Naive thymus-derived CD4-positive, alpha-beta T cell (primary cell): ENCODE measurements at regions of chr3 and their contacts with region 1.

Region 1: DNA sequence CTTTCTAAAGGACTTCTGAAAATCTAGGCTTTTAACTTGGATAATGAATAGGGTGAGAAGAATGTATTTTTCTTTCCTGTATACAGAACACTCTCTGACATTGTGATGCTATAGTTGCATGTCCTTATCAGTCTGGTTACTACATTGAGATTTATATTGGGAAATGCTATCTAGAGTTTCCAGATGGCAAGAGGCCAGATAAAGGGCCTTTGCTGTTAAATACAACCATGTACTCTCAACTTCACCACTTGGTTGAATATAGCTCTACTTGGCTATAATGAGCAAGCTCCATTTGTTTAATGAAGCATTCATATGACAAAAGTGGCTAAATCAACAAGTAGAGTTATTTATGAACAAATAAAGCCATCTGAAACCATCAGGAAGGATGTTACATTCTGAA is 91.0 kb downstream of the IGSF11 start:
- DNase-seq: no peak
- ATAC-seq: no peak
- H3K4me3 ChIP-seq: no peak overlapping the region
- H3K4me3 Mint-ChIP-seq: no peak overlapping the region
- H3K27ac ChIP-seq: no peak overlapping the region
- H3K27ac Mint-ChIP-seq: peak overlapping the region in 1 of 9 donors; percentile 26
- H3K4me1 ChIP-seq: peaks cover 0 to 28% of the 10 kb centered on the region in 2 donors
- H3K4me1 Mint-ChIP-seq: peaks cover 24 to 72% (median 66%) of the 10 kb centered on the region in 7 donors
- H3K27me3 ChIP-seq: no peaks in the 10 kb centered on the region
- H3K27me3 Mint-ChIP-seq: peaks cover 0 to 9% (median 0%) of the 10 kb centered on the region in 5 donors

Region 2: DNA sequence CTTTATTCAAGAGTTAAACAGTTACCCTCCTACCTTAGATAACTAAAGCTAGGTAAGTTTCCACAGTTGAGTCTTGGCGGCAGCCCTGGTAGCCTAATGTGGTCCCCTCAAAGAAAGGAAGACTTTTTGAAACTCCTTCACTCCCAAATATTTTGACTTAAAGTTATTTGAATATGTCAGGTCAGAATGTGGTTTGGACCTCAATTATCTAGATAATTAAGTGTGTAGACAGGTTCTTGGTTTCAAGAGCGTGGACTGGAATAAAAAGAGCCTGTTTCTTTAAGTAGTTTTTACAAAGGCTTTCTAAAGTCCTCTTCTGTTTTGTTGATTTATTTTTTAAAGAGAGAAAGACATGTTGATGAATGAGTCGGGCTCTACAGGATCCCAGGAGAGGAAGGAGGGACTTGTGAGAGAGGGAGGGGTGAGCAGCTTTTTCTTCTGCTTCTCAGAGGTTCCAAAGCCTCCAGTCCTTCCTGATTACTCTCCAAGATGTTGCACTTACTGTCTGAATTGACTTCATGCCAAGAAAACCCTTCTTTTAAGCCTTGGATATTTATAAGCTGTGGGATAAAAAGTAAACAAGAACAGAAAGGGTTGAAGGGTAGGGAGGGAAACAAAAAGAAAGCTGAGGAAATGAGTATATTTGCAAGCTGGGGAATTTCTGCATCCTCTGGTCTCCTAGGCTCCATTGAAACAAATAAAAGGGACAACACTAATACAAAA is 366.4 kb before region 1 on chr3:
- CTCF ChIA-PET with region 1: no interaction called
- POLR2A ChIA-PET with region 1: no interaction called
- intact Hi-C with region 1: no loop called
- DNase-seq: no peak
- ATAC-seq: no peak
- H3K4me3 ChIP-seq: no peak overlapping the region
- H3K4me3 Mint-ChIP-seq: no peak overlapping the region
- H3K27ac ChIP-seq: no peak overlapping the region
- H3K27ac Mint-ChIP-seq: no peak overlapping the region
- H3K4me1 ChIP-seq: no peaks in the 10 kb centered on the region
- H3K4me1 Mint-ChIP-seq: no peaks in the 10 kb centered on the region
- H3K27me3 ChIP-seq: no peaks in the 10 kb centered on the region
- H3K27me3 Mint-ChIP-seq: peaks cover 0 to 9% (median 0%) of the 10 kb centered on the region in 5 donors

Region 3: DNA sequence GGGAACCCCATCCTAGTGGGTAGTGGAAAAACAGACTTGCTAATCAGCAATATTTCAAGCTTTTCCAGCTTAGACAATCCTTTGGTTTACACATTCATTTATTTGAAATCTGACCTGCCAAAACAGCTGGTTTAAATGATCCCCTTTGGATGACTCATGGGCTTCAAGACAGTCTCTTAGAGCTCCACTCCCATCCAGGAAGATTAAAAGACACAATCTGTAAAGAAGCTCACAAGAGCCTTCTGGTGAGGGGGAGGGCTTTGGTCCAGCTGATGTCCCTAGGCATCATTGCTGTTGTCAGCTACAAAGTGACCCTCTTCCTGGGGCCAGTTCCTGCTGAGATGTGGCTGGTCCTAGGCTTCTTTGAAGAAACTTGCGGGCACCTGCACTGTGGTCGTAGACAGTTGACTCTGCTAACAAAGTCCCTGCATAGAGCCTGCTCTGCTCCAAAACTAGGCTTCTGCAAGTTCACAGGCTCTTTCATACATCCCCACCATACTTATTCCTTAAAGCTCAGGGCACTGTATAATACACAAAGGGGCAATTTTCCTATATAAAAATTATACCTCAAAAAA is 17.4 kb after region 1 on chr3:
- CTCF ChIA-PET with region 1: interaction called, 6 read pairs
- POLR2A ChIA-PET with region 1: interaction called, 5 read pairs
- intact Hi-C with region 1: loop called in 1 of 2 experiments (anchors 1 kb)
- DNase-seq: no peak
- ATAC-seq: no peak
- H3K4me3 ChIP-seq: no peak overlapping the region
- H3K4me3 Mint-ChIP-seq: no peak overlapping the region
- H3K27ac ChIP-seq: no peak overlapping the region
- H3K27ac Mint-ChIP-seq: no peak overlapping the region
- H3K4me1 ChIP-seq: peaks cover 9 to 19% of the 10 kb centered on the region in 2 donors
- H3K4me1 Mint-ChIP-seq: peaks cover 13 to 34% (median 29%) of the 10 kb centered on the region in 7 donors
- H3K27me3 ChIP-seq: no peaks in the 10 kb centered on the region
- H3K27me3 Mint-ChIP-seq: peaks cover 0 to 25% (median 4%) of the 10 kb centered on the region in 5 donors

Region 4: DNA sequence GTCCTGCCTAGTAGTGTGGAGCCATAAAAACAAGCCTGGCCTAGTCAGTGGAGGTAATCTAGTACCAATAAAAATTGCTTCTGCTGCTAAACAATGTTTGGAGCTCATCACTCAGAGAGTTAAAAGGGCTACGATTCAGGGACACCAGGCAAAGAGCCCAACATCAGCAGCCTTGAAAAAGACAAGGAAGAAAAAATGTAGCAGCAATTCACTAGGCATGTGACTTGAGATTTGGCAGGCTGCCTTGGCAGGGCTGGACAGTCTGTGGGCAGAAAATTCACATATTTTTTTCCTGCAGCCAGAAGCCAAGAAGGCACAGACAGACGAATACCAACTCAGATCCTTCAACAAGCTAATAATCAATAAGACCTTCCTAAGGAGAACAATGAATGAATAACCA is 43.9 kb after region 1 on chr3:
- CTCF ChIA-PET with region 1: no interaction called
- POLR2A ChIA-PET with region 1: no interaction called
- intact Hi-C with region 1: loop called in 1 of 2 experiments (anchors 5 kb)
- DNase-seq: no peak
- ATAC-seq: no peak
- H3K4me3 ChIP-seq: no peak overlapping the region
- H3K4me3 Mint-ChIP-seq: no peak overlapping the region
- H3K27ac ChIP-seq: no peak overlapping the region
- H3K27ac Mint-ChIP-seq: no peak overlapping the region
- H3K4me1 ChIP-seq: no peaks in the 10 kb centered on the region
- H3K4me1 Mint-ChIP-seq: peaks cover 0 to 23% (median 4%) of the 10 kb centered on the region in 7 donors
- H3K27me3 ChIP-seq: no peaks in the 10 kb centered on the region
- H3K27me3 Mint-ChIP-seq: peaks cover 0 to 11% (median 0%) of the 10 kb centered on the region in 5 donors